PC-9 (cell line): ENCODE measurements at regions of chr4 and their contacts with region 1.

Region 1: GRCh38 chr4:168183717-168184608 is 91.6 kb downstream of the ANXA10 start:
- DNase-seq: no peak
- H3K4me3 ChIP-seq: no peak overlapping the region
- H3K27ac ChIP-seq: no peak overlapping the region
- H3K4me1 ChIP-seq: no peaks in the 10 kb centered on the region
- H3K27me3 ChIP-seq: no peaks in the 10 kb centered on the region
- CTCF ChIP-seq: peak; percentile 78

Region 2: DNA sequence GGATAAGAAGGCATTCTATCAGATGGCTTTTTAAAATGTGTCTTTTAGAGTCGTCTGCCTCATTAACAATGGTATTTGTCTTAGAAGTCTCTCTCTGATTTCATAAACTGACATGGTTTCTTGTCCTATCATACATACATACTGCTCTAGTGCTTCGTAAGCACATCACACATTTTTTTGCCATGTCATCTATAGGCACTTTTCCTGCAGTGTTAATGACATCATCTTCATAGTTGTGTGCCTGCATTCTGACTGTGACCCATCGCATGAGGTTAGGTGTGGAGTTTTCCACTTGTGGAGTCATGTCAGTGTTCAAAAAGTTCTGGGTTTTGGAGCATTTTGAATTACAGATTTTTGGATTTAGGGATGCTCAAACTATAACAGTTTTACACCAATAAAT is 588.1 kb before region 1 on chr4:
- CTCF ChIA-PET with region 1: no interaction called
- POLR2A ChIA-PET with region 1: no interaction called
- intact Hi-C with region 1: no loop called
- DNase-seq: no peak
- H3K4me3 ChIP-seq: no peak overlapping the region
- H3K27ac ChIP-seq: no peak overlapping the region
- H3K4me1 ChIP-seq: no peaks in the 10 kb centered on the region
- H3K27me3 ChIP-seq: no peaks in the 10 kb centered on the region
- CTCF ChIP-seq: no peak

Region 3: GRCh38 chr4:168408620-168409019 is 224.7 kb after region 1 on chr4:
- CTCF ChIA-PET with region 1: no interaction called
- POLR2A ChIA-PET with region 1: no interaction called
- intact Hi-C with region 1: loop called (anchors 5 kb)
- DNase-seq: peak in 1 of 2 experiments; percentile 10
- H3K4me3 ChIP-seq: no peak overlapping the region
- H3K27ac ChIP-seq: no peak overlapping the region
- H3K4me1 ChIP-seq: 0 out of 2 replicates have a peak, but pooled peaks cover 7% of the 10 kb centered on the region
- H3K27me3 ChIP-seq: no peaks in the 10 kb centered on the region
- CTCF ChIP-seq: no peak

Region 4: DNA sequence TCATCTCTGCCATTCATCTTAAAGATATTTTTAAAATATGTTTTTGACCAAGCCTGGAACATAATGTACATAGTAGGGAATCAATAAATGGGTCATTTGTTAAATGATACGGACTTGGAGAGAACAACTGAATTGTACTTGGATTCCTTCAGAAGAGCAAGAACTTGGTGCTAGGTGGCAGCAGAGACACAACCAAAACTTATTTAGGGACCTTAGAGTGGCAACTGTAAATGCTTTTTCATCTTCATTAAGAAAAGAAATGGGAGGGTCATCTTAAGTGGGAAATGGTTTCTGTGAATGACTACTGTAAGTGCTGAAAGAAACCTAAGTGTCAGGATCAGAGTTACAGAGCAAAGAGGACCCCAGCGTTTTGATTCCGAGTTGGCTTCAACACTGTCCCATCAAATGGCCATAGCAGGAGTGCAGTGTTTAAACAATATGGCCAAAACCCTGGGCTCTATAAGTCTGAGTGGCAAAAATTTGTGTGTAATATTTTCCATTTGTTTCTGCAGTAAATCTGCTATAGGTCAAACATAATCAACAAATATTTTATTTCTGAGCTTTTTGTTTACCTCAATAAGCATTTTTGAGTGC is 526.5 kb after region 1 on chr4:
- CTCF ChIA-PET with region 1: no interaction called
- POLR2A ChIA-PET with region 1: no interaction called
- intact Hi-C with region 1: loop called (anchors 10 kb)
- DNase-seq: peak in 1 of 2 experiments; percentile 15
- H3K4me3 ChIP-seq: no peak overlapping the region
- H3K27ac ChIP-seq: no peak overlapping the region
- H3K4me1 ChIP-seq: no peaks in the 10 kb centered on the region
- H3K27me3 ChIP-seq: no peaks in the 10 kb centered on the region
- CTCF ChIP-seq: peak; percentile 45

Region 5: DNA sequence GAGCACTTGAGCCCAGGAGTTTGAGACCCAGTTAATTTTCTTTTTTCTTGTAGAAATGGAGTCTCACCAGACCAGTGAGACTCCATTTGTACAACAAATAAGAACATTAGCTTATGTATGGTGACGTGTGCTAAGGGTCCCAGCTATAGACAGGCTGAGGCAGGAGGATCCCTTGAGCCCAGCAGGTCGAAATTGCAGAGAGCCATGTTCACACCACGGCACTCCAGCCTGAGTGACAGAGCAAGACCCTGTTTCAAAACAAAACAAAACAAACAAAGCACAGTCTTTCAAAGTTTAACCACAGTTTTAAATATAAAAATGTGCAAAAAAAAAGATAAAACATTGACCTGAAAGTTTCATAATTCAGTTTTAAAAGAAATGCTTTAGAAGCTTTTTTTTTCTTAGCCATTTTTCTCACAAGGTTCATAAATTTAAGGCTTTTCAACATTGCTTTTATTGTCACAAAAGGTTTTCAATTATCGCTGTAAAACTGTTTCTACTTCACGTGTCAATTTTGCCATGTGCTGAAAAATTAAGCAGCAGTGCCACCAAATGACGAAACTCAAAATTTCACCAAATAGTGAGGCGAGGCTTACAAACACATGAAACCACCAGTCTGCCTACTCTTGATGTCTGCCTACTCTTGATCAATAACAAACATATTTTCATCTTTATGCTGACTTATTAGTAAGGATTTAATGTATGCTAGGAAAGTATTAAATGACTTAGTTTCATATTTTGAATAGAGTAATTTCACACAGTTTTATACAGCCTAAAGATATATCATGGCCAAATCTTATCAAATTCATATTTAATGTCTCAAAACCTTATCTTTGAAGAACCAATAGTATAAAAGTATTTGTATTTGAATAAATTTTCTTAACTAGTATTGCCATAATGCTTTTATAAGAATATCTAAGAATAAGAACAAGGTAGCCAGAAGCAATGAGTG is 1302.1 kb after region 1 on chr4:
- CTCF ChIA-PET with region 1: no interaction called
- POLR2A ChIA-PET with region 1: no interaction called
- intact Hi-C with region 1: loop called (anchors 2 kb)
- DNase-seq: peak; percentile 43 to 48
- H3K4me3 ChIP-seq: no peak overlapping the region
- H3K27ac ChIP-seq: no peak overlapping the region
- H3K4me1 ChIP-seq: peaks cover 4% of the 10 kb centered on the region; the same call in 1 of the 2 replicates
- H3K27me3 ChIP-seq: no peaks in the 10 kb centered on the region
- CTCF ChIP-seq: peak; percentile 68

Region 6: DNA sequence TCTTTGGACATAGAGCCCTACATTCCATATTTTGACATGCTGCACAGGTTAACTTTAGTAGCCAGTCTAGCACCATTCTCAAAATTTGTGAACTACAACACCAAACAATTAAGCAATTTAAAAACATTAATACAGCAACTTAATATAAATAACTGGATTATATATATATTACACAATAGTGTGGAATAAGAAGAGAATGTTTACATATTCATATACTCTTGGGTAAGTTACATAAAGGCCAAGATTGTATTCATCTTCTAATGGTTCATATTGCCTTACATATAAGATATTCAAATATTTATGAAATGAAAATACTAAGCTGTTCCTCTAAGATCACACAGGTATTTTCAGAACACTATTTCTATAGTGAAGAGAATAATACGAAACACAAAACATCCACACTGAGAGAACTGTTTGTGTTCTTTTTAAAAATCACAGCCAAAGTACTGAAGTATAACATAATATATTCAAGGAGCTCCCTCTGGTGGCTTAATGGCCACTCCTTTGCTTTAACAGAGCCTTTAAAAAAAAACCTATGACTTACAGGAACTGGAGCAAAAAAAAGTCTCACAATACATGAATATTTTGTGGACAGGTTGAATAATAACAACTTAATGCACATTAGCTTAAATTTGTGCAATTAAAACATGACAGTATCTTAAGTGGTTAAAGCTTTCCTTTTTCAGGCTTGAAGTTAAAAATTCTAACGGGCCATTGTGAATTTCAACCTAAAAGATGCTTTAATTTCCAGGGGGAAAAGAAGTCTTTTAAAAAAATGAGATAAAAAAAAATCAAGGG is 1382.3 kb after region 1 on chr4:
- CTCF ChIA-PET with region 1: no interaction called
- POLR2A ChIA-PET with region 1: no interaction called
- intact Hi-C with region 1: loop called (anchors 10 kb)
- DNase-seq: peak in 1 of 2 experiments; percentile 18
- H3K4me3 ChIP-seq: no peak overlapping the region
- H3K27ac ChIP-seq: no peak overlapping the region
- H3K4me1 ChIP-seq: no peaks in the 10 kb centered on the region
- H3K27me3 ChIP-seq: no peaks in the 10 kb centered on the region
- CTCF ChIP-seq: peak; percentile 65